Panc1 (cell line): ENCODE measurements at regions of chr2 and their contacts with region 1.

Region 1: DNA sequence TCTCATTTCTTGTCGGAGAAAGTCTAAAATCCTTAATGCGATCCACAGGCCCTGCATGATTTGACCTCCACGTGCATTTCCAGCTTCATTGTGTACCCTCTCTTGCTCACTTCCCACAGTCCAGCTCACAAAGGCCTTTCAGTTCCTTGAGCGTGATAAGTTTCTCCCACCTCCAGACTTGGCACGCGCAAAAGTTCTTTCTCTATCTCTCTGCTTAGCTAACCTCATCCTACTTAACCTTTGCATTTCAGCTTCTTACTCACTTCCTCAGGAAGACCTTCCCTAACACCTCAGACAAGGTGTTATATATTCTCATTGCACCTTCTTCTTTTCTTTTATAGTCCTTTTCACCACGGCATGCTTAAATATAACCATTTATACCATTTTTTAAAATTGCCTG is 124.8 kb upstream of the XPO1 start:
- DNase-seq: no peak
- ATAC-seq: no peak
- H3K4me3 ChIP-seq: no peak overlapping the region
- H3K27ac ChIP-seq: no peak overlapping the region
- H3K4me1 ChIP-seq: peaks cover 11% of the 10 kb centered on the region; the same call in 1 of the 2 replicates
- H3K27me3 ChIP-seq: no peaks in the 10 kb centered on the region
- CTCF ChIP-seq: no peak

Region 2: DNA sequence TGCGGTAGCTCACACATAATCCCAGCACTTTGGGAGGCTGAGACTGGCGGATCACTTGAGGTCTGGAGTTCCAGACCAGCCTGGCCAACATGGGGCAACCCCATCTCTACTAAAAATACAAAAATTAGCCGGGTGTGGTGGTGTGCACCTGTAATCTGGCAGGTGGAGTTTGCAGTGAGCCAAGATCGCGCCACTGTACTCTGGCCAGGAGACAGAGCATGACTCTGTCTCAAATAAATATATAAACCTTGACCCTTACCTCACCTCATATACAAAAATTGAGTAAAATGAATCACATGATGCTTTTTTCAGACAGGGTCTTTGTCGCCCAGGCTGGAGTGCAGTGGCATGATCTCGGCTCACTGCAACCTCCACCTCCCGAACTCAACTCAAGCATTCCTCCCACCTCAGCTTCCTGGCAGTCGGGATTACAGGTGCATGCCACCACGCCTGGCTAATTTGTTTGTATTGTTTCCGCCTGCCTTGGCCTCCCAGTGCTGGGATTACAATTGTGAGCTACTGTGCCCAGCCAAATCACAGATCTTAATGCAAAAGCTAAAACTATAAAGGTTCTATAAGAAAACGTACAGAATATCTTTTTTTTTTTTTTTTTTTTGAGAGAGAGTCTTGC is 150.1 kb before region 1 on chr2:
- CTCF ChIA-PET with region 1: no interaction called
- POLR2A ChIA-PET with region 1: interaction called, 18 read pairs
- in situ Hi-C with region 1: no loop called
- intact Hi-C with region 1: no loop called
- DNase-seq: no peak
- ATAC-seq: no peak
- H3K4me3 ChIP-seq: no peak overlapping the region
- H3K27ac ChIP-seq: no peak overlapping the region
- H3K4me1 ChIP-seq: no peaks in the 10 kb centered on the region
- H3K27me3 ChIP-seq: no peaks in the 10 kb centered on the region
- CTCF ChIP-seq: no peak

Region 3: GRCh38 chr2:62014102-62014501 is 351.1 kb after region 1 on chr2:
- CTCF ChIA-PET with region 1: no interaction called
- POLR2A ChIA-PET with region 1: no interaction called
- in situ Hi-C with region 1: no loop called
- intact Hi-C with region 1: no loop called
- DNase-seq: no peak
- ATAC-seq: peak; percentile 48; the same call in 1 of the 2 replicates
- H3K4me3 ChIP-seq: no peak overlapping the region
- H3K27ac ChIP-seq: no peak overlapping the region
- H3K4me1 ChIP-seq: no peaks in the 10 kb centered on the region
- H3K27me3 ChIP-seq: no peaks in the 10 kb centered on the region
- CTCF ChIP-seq: no peak